SK-N-SH (cell line): ENCODE measurements at regions of chr1 and their contacts with region 1.

Region 1: GRCh38 chr1:24070821-24071393 is 41.0 kb downstream of the MYOM3 start:
- DNase-seq: peak; percentile 90
- H3K4me3 ChIP-seq: no peak overlapping the region; a peak in 1 of 4 replicates
- H3K27ac ChIP-seq: no peak overlapping the region
- H3K4me1 ChIP-seq: peaks cover 0 to 3% of the 10 kb centered on the region in 2 experiments; a peak in 1 of 4 replicates
- H3K27me3 ChIP-seq: no peaks in the 10 kb centered on the region
- CTCF ChIP-seq: peak; percentile 87
- EP300 ChIP-seq: no peak
- RAD21 ChIP-seq: peak; percentile 91

Region 2: DNA sequence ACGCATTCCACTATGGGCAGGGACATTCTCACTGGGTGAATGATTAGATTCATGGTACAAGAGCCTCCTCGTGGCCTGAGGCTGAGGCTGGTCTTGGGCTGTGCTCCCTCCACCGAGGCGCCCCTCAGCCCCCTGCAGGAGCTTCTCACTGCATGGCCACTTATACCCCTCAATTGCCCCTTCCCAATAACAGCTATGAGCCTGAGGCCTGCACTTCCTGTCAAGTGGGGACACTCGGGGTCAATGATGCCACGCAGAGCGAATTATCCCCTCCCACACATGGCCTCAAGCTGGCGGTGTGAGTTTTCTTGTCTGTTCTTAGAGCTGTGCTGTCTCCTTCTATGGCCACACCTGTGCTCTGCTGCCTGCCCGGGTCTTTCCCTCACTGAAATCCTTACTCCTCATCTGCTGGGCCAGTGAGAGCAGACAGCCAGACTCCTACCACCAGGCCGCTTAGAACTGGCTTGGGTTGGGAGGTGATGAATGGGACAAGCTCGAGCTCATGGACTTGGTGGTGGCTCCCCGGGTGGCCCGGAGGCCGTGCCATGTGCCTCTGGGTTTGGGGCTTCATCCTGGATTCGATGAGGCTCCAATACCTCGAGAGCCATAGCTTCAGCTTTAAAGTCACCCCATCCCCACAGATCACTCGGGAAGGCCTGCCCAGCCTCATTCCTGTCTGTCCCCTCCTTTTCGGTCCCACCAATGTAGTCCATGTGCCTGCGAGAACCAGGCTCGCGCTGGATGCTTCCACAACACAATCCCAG is 10.6 kb before region 1 on chr1:
- CTCF ChIA-PET with region 1: interaction called, 28 read pairs
- POLR2A ChIA-PET with region 1: no interaction called
- DNase-seq: no peak
- H3K4me3 ChIP-seq: no peak overlapping the region
- H3K27ac ChIP-seq: no peak overlapping the region
- H3K4me1 ChIP-seq: no peaks in the 10 kb centered on the region
- H3K27me3 ChIP-seq: no peaks in the 10 kb centered on the region
- CTCF ChIP-seq: no peak
- EP300 ChIP-seq: no peak
- RAD21 ChIP-seq: no peak

Region 3: GRCh38 chr1:24102961-24103360 is 32.1 kb after region 1 on chr1:
- CTCF ChIA-PET with region 1: interaction called, 19 read pairs
- POLR2A ChIA-PET with region 1: no interaction called
- DNase-seq: peak; percentile 49
- H3K4me3 ChIP-seq: no peak overlapping the region
- H3K27ac ChIP-seq: peak overlapping the region in 1 of 2 experiments; percentile 2; a peak in 2 of 4 replicates
- H3K4me1 ChIP-seq: peaks cover 3 to 20% of the 10 kb centered on the region in 2 experiments; a peak in 2 of 4 replicates
- H3K27me3 ChIP-seq: no peaks in the 10 kb centered on the region
- CTCF ChIP-seq: no peak
- EP300 ChIP-seq: no peak
- RAD21 ChIP-seq: no peak

Region 4: GRCh38 chr1:24119859-24120756 is 49.2 kb after region 1 on chr1:
- CTCF ChIA-PET with region 1: interaction called, 11 read pairs
- POLR2A ChIA-PET with region 1: no interaction called
- DNase-seq: no peak
- H3K4me3 ChIP-seq: no peak overlapping the region
- H3K27ac ChIP-seq: no peak overlapping the region
- H3K4me1 ChIP-seq: no peaks in the 10 kb centered on the region; a peak in 1 of 4 replicates
- H3K27me3 ChIP-seq: no peaks in the 10 kb centered on the region; the same call in 1 of the 2 replicates
- CTCF ChIP-seq: no peak
- EP300 ChIP-seq: no peak
- RAD21 ChIP-seq: no peak

Region 5: GRCh38 chr1:24186993-24187805 is 116.3 kb after region 1 on chr1 and contains the start of gene IFNLR1:
- CTCF ChIA-PET with region 1: interaction called, 12 read pairs
- POLR2A ChIA-PET with region 1: no interaction called
- DNase-seq: peak; percentile 89
- H3K4me3 ChIP-seq: peak within 1 kb of the TSS; percentile 49 to 58
- H3K27ac ChIP-seq: no peak within 1 kb of the TSS
- H3K4me1 ChIP-seq: peaks cover 0 to 5% of the 10 kb centered on the region in 2 experiments; a peak in 1 of 4 replicates
- H3K27me3 ChIP-seq: peaks cover 4% of the 10 kb centered on the region; the same call in 1 of the 2 replicates
- CTCF ChIP-seq: no peak
- EP300 ChIP-seq: no peak
- RAD21 ChIP-seq: no peak
- polyA plus RNA-seq, gene IFNLR1: 0.29 and 0.30 TPM in 2 replicates

Region 6: GRCh38 chr1:24289937-24290595 is 219.2 kb after region 1 on chr1:
- CTCF ChIA-PET with region 1: no interaction called
- POLR2A ChIA-PET with region 1: no interaction called
- DNase-seq: peak; percentile 65
- H3K4me3 ChIP-seq: no peak overlapping the region
- H3K27ac ChIP-seq: peak overlapping the region in 1 of 2 experiments; percentile 81; a peak in 1 of 4 replicates
- H3K4me1 ChIP-seq: peaks cover 6 to 10% of the 10 kb centered on the region in 2 experiments; a peak in 3 of 4 replicates
- H3K27me3 ChIP-seq: no peaks in the 10 kb centered on the region
- CTCF ChIP-seq: no peak
- EP300 ChIP-seq: peak in 1 of 2 experiments; percentile 42; a peak in 1 of 4 replicates
- RAD21 ChIP-seq: no peak; the same call in 1 of the 2 replicates

Region 7: GRCh38 chr1:24351918-24352627 is 281.2 kb after region 1 on chr1:
- CTCF ChIA-PET with region 1: no interaction called
- POLR2A ChIA-PET with region 1: no interaction called
- DNase-seq: no peak
- H3K4me3 ChIP-seq: no peak overlapping the region
- H3K27ac ChIP-seq: peak overlapping the region in 1 of 2 experiments; percentile 6; a peak in 1 of 4 replicates
- H3K4me1 ChIP-seq: peaks cover 0 to 4% of the 10 kb centered on the region in 2 experiments; a peak in 1 of 4 replicates
- H3K27me3 ChIP-seq: no peaks in the 10 kb centered on the region
- CTCF ChIP-seq: no peak
- EP300 ChIP-seq: no peak
- RAD21 ChIP-seq: no peak